ENCODE measurements at regions of chr3 and their contacts with region 1.

Region 1: DNA sequence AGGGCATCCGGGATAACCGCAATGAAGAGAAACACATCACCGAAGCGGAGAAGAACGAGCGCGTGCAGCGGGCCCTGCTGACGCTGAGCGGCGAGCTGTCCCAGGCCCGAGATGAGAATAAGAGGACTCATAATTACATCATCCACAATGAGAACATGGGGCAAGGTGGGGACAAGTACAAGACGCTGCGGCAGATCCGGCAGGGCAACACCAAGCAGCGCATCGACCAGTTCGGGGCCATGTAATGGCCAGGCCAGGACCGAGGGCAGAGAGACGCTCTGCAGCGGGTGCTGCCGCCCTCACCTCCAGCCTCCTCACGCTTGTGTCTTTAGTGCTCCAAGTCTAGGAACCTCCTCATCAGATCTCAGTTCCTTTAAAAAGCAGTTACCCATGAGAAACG is 863.7 kb upstream of the ALCAM start:
- DNase-seq: no peak
- ATAC-seq: peak; percentile 7
- H3K4me3 ChIP-seq: no peak overlapping the region
- H3K27ac ChIP-seq: no peak overlapping the region
- H3K4me1 ChIP-seq: no peaks in the 10 kb centered on the region
- H3K27me3 ChIP-seq: no peaks in the 10 kb centered on the region

Region 2: GRCh38 chr3:104556372-104557078 is 53.5 kb after region 1 on chr3:
- intact Hi-C with region 1: loop called in 1 of 2 experiments (anchors 10 kb)
- DNase-seq: no peak
- ATAC-seq: peak; percentile 57
- H3K4me3 ChIP-seq: no peak overlapping the region
- H3K27ac ChIP-seq: peak overlapping the region; percentile 74 to 87
- H3K4me1 ChIP-seq: peaks cover 2% of the 10 kb centered on the region in 2 donors
- H3K27me3 ChIP-seq: no peaks in the 10 kb centered on the region

Measured in aorta (tissue), 5 donors.